ENCODE measurements at regions of chr2 and their contacts with region 1.

Region 1: GRCh38 chr2:109510136-109511028 is 103.4 kb downstream of the SEPTIN10 start:
- DNase-seq: peak; percentile 89
- H3K4me3 ChIP-seq: no peak overlapping the region
- H3K27ac ChIP-seq: no peak overlapping the region
- H3K4me1 ChIP-seq: no peaks in the 10 kb centered on the region
- H3K27me3 ChIP-seq: no peaks in the 10 kb centered on the region
- CTCF ChIP-seq: peak; percentile 85

Region 2: DNA sequence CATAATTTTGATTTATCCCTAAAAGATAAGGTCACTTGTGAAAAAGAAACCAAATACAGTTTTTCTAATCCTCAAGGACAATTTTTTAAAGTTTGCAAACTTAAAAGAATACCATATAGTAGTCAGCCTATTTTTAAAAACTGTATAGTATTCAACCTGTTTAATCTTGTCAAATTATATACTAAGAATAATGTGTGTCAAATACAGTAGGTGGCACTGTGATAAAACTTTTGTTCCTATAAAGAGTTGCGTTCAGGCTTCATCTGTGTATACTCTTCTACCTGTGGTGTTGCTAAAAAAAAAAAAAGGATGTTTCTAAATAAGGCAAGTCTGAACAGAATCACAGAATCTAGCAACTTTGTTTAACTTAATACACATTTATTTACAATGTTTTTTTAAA is 655.2 kb before region 1 on chr2:
- intact Hi-C with region 1: loop called (anchors 10 kb)
- DNase-seq: no peak
- H3K4me3 ChIP-seq: no peak overlapping the region
- H3K27ac ChIP-seq: no peak overlapping the region
- H3K4me1 ChIP-seq: no peaks in the 10 kb centered on the region
- H3K27me3 ChIP-seq: no peaks in the 10 kb centered on the region
- CTCF ChIP-seq: no peak

Region 3: GRCh38 chr2:109125593-109126500 is 384.5 kb before region 1 on chr2:
- intact Hi-C with region 1: loop called (anchors 2 kb)
- DNase-seq: no peak
- H3K4me3 ChIP-seq: no peak overlapping the region
- H3K27ac ChIP-seq: no peak overlapping the region
- H3K4me1 ChIP-seq: no peaks in the 10 kb centered on the region
- H3K27me3 ChIP-seq: peaks cover 22% of the 10 kb centered on the region
- CTCF ChIP-seq: no peak

Region 4: DNA sequence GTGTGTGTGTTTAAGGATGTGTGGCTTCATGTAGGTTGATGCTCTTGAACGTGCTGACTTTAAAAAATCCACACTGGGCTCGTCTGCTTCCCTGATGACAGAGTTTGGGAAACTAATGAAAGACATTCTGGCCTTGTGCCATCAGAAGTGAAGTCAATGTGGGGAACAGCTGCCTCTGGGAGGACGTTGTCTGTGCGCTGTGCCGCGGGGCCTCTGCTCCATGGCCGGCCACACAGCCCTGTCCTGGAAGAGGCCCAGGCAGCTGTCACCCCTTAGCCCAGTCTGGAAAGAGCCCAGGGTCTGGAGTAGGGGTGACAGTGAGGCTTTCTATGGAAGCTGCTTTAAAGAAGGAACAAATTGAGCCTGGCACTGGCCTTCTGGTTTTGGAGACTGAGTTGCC is 225.6 kb before region 1 on chr2:
- intact Hi-C with region 1: loop called (anchors 10 kb)
- DNase-seq: no peak
- H3K4me3 ChIP-seq: no peak overlapping the region
- H3K27ac ChIP-seq: no peak overlapping the region
- H3K4me1 ChIP-seq: no peaks in the 10 kb centered on the region
- H3K27me3 ChIP-seq: no peaks in the 10 kb centered on the region
- CTCF ChIP-seq: no peak

Region 5: GRCh38 chr2:109448946-109449788 is 61.2 kb before region 1 on chr2:
- intact Hi-C with region 1: loop called (anchors 5 kb)
- DNase-seq: no peak
- H3K4me3 ChIP-seq: no peak overlapping the region
- H3K27ac ChIP-seq: no peak overlapping the region
- H3K4me1 ChIP-seq: no peaks in the 10 kb centered on the region
- H3K27me3 ChIP-seq: no peaks in the 10 kb centered on the region
- CTCF ChIP-seq: no peak